MCF 10A (cell line): ENCODE measurements at regions of chr6 and their contacts with region 1.

Region 1: DNA sequence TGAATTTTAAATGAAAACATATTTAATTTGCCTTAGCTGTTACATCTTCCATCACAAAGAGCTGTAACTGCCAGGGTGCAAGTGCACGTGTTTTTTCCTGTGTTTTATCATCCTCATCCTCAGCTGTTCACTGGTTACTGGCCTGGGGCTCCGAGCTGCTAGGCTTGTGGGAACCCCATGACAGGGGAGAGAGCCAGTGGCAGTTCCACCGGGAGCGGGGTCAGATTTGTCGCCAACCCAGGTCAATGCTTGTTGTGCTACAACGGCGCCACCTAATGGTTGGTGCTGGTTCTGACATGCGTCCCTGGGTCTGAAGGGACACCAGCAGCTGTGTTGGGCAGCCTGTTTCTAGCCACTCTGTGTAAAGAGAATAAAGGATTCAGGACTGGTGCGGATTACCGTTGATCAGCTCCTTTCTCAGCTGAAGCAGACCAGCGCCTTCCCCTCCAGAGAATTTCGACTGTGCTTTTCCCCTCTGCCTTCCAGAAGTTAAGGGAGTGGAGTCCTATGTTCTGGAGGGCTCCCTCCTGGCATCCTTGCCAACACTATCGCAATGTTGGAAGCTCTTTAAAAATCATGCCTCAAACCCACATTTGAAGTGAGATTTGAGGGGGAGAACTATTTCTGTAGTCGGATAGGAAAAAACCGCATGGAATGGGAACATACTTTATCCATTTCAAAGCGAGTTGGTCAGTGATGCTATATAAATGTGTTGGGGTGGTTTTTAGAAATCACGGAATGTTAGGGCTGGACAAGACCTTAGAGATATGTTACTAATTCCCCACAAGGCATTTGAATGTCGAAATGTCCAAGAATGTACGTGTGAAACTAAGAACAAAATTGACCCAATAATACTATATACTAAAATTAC is 32.1 kb downstream of the SUMO4 start:
- DNase-seq: peak; percentile 87
- H3K4me3 Mint-ChIP-seq: no peak overlapping the region
- H3K27ac Mint-ChIP-seq: no peak overlapping the region
- H3K4me1 Mint-ChIP-seq: peaks cover 4% of the 10 kb centered on the region
- H3K27me3 Mint-ChIP-seq: no peaks in the 10 kb centered on the region
- CTCF ChIP-seq: peak; percentile 92

Region 2: DNA sequence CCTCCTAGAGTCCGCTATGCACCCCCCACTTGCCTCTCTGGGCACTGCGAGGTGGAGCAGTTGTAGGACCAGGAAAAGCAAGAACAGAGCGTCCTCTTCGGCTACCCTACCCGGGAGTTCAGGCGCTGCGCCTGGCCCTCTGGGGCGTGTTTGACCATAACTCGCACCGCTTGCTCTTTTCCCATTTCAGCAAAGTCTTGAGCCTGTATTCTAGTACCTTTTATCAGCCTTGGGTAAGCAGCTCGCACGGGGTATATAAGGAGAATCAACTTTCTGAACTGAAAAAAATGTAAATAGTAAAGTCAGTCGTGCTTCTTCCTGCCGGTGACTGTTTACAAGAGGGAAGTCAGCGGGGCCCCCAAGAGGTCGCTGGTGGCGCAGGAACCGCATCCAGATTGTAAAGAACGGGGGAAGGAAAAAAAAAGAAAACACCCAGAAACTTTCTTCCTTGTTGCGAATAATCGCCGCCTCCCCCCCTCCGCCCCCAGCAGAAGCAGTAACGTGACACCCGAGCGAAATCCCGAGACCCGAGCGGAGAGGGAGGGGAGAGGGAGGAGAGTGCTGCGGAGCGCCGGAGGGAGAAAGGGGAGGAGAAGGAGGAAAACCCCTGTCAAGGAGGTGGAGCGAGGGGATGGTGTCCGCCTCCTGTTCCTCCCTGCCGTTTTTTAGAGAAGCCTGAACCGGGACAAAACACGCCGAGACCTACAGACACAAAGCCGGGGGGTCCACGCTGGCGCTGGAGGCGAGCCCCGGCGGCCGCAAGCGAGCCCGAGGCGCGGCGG is 685.6 kb before region 1 on chr6 and contains the start of gene UST:
- CTCF ChIA-PET with region 1: no interaction called
- POLR2A ChIA-PET with region 1: no interaction called
- intact Hi-C with region 1: loop called (anchors 10 kb)
- DNase-seq: peak; percentile 96
- H3K4me3 Mint-ChIP-seq: peak within 1 kb of the TSS; percentile 88
- H3K27ac Mint-ChIP-seq: peak within 1 kb of the TSS; percentile 74
- H3K4me1 Mint-ChIP-seq: peaks cover 42% of the 10 kb centered on the region
- H3K27me3 Mint-ChIP-seq: no peaks in the 10 kb centered on the region
- CTCF ChIP-seq: peak; percentile 76
- total RNA-seq, gene UST: 10.0 and 10.8 TPM in 2 replicates

Region 3: DNA sequence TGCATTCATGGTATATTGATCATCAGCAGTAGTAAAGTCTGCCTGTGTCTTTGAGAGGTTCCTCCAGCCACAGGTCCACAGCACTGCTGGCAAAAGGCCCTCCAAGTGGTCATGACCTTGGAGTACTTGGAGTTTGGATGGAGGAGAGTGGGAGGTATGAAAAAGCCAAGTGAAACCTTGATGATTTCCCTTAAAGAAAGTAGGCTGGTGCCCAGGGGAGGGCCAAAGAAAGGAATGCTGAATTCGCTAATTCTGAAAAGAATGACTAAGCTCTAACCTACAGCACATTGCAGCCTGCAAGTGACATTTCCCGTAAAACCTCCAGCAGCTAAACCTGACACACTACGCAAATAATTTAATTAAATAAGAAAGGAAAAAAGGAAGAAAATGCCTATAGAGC is 338.0 kb before region 1 on chr6:
- CTCF ChIA-PET with region 1: interaction called, 49 read pairs
- POLR2A ChIA-PET with region 1: interaction called, 6 read pairs
- intact Hi-C with region 1: no loop called
- DNase-seq: peak; percentile 26
- H3K4me3 Mint-ChIP-seq: no peak overlapping the region
- H3K27ac Mint-ChIP-seq: no peak overlapping the region
- H3K4me1 Mint-ChIP-seq: peaks cover 19% of the 10 kb centered on the region
- H3K27me3 Mint-ChIP-seq: no peaks in the 10 kb centered on the region
- CTCF ChIP-seq: no peak

Region 4: DNA sequence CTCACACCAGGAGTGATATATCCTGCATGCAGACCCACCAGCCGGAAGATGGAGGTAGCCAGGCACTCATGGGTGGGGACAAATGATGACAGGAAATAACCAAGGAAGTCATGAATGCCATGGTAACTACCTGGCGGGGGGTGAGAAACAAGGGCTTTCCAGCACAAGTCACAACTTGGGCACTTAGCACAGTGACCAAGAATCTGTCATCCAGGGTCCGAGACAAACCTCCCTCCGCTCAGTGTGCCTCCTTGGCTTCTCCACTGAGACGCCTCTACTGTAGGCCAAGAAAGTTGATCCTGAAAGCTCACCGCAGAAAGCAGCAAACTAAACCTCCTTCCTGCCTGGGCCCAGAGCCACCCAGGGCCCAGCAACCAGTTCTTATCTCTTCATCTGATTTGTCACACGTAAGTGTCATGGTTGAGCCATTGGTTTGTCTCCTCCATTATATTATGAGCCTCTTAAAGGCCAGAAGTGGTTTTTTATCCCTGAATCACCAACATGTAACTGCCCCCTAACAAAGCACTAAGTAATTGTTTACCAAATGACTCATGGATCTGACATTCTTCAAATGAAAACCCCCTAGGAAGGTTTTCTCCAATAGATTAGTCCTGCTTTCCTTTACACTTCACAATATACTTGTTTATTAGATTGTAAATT is 199.0 kb before region 1 on chr6:
- CTCF ChIA-PET with region 1: interaction called, 10 read pairs
- POLR2A ChIA-PET with region 1: no interaction called
- intact Hi-C with region 1: no loop called
- DNase-seq: peak; percentile 81
- H3K4me3 Mint-ChIP-seq: no peak overlapping the region
- H3K27ac Mint-ChIP-seq: peak overlapping the region; percentile 62
- H3K4me1 Mint-ChIP-seq: peaks cover 38% of the 10 kb centered on the region
- H3K27me3 Mint-ChIP-seq: no peaks in the 10 kb centered on the region
- CTCF ChIP-seq: no peak

Region 5: GRCh38 chr6:149419696-149420404 is 12.3 kb before region 1 on chr6:
- CTCF ChIA-PET with region 1: interaction called, 14 read pairs
- POLR2A ChIA-PET with region 1: no interaction called
- intact Hi-C with region 1: no loop called
- DNase-seq: no peak
- H3K4me3 Mint-ChIP-seq: no peak overlapping the region
- H3K27ac Mint-ChIP-seq: no peak overlapping the region
- H3K4me1 Mint-ChIP-seq: no peaks in the 10 kb centered on the region
- H3K27me3 Mint-ChIP-seq: no peaks in the 10 kb centered on the region
- CTCF ChIP-seq: no peak